PC-3 (cell line): ENCODE measurements at regions of chr3 and their contacts with region 1.

Region 1: GRCh38 chr3:150495563-150496168 is 50.6 kb downstream of the SERP1 start:
- DNase-seq: peak; percentile 85
- ATAC-seq: peak; percentile 15
- H3K4me3 ChIP-seq: no peak overlapping the region
- H3K27ac ChIP-seq: no peak overlapping the region
- H3K4me1 ChIP-seq: peaks cover 38% of the 10 kb centered on the region
- H3K27me3 ChIP-seq: no peaks in the 10 kb centered on the region
- CTCF ChIP-seq: peak; percentile 91

Region 2: DNA sequence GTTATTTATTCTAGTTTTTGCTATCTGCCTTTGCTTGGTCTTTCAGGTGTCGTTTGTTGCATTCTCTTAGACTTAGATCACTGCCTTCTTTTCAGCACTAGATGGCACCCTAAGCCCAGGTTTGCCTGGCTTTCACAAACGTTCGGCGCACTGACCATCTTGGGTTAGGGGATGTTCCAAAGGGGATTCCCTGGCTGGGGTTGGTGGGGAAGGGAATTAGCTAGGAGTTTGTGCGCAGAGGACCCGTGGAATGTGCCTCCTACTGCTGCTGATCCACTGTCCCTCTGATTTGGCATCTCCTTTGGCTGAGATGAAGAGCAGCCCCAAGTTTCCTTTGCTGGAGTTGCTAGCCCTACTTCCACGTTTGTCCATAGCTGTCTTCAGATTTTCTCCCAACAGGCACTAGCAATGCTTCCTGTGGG is 558.8 kb before region 1 on chr3:
- CTCF ChIA-PET with region 1: no interaction called
- POLR2A ChIA-PET with region 1: no interaction called
- intact Hi-C with region 1: loop called (anchors 5 kb)
- DNase-seq: peak; percentile 77
- ATAC-seq: peak; percentile 93
- H3K4me3 ChIP-seq: peak overlapping the region; percentile 37; the same call in 1 of the 2 replicates
- H3K27ac ChIP-seq: no peak overlapping the region
- H3K4me1 ChIP-seq: peaks cover 5% of the 10 kb centered on the region; the same call in 1 of the 2 replicates
- H3K27me3 ChIP-seq: no peaks in the 10 kb centered on the region
- CTCF ChIP-seq: peak; percentile 95

Region 3: GRCh38 chr3:150227839-150228238 is 267.8 kb before region 1 on chr3:
- CTCF ChIA-PET with region 1: no interaction called
- POLR2A ChIA-PET with region 1: no interaction called
- intact Hi-C with region 1: loop called (anchors 2 kb)
- DNase-seq: peak; percentile 83
- ATAC-seq: peak; percentile 87
- H3K4me3 ChIP-seq: no peak overlapping the region
- H3K27ac ChIP-seq: no peak overlapping the region
- H3K4me1 ChIP-seq: peaks cover 7% of the 10 kb centered on the region
- H3K27me3 ChIP-seq: no peaks in the 10 kb centered on the region
- CTCF ChIP-seq: peak; percentile 93

Region 4: GRCh38 chr3:150286390-150287147 is 209.1 kb before region 1 on chr3:
- CTCF ChIA-PET with region 1: interaction called, 6 read pairs
- POLR2A ChIA-PET with region 1: no interaction called
- intact Hi-C with region 1: loop called (anchors 1 kb)
- DNase-seq: peak; percentile 80
- ATAC-seq: peak; percentile 98
- H3K4me3 ChIP-seq: peak overlapping the region; percentile 29
- H3K27ac ChIP-seq: no peak overlapping the region
- H3K4me1 ChIP-seq: peaks cover 7% of the 10 kb centered on the region
- H3K27me3 ChIP-seq: no peaks in the 10 kb centered on the region
- CTCF ChIP-seq: peak; percentile 87

Region 5: GRCh38 chr3:150348500-150348899 is 147.2 kb before region 1 on chr3:
- CTCF ChIA-PET with region 1: no interaction called
- POLR2A ChIA-PET with region 1: no interaction called
- intact Hi-C with region 1: loop called (anchors 2 kb)
- DNase-seq: peak; percentile 96
- ATAC-seq: peak; percentile 78
- H3K4me3 ChIP-seq: peak overlapping the region; percentile 53
- H3K27ac ChIP-seq: peak overlapping the region; percentile 83
- H3K4me1 ChIP-seq: peaks cover 72% of the 10 kb centered on the region
- H3K27me3 ChIP-seq: no peaks in the 10 kb centered on the region
- CTCF ChIP-seq: no peak

Region 6: DNA sequence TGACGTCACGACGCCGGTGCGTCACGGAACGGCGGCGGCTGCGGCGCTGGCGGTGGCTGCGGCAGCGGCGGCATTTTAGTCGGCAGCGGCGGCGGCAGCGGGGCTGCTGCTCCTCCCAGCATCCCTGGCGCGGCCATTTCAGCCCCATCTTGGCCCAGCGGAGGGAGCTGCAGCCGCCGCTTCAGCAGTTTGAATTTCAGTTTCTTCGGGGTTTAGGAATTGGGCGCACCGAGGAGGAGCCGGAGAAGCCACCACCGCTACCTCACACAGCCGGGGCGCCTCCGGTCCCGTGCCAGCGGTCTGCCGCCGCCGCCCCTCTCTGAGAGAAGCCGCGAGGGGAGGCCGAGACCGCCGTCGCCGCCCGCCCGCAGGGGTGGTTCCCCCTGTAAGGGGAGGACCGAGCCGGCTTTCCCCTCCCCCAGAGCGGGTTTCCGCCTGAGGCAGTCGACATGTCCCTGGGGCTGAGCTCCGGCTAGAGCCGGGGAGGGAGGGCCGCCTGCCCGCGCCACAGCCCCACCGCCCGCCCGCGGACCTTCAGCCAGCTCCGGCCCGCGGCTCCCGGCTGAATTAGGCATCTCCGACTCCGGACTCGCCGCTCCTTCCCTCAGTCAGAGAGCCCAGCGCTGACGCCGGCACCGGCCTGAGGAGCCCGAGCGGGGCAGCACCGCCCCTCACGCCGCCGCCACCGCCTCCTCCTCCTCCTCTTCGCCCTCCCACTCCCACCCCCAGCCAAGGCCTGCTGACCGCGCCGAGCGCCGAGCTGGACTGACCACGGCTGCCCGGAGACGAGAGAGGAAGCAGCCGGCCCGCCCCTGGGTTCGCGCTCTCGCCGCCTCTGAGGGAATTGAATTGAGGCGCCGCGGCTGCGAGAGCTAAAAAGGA is 87.2 kb before region 1 on chr3 and contains the start of gene TSC22D2:
- CTCF ChIA-PET with region 1: interaction called, 22 read pairs
- POLR2A ChIA-PET with region 1: interaction called, 3 read pairs
- intact Hi-C with region 1: loop called (anchors 1 kb)
- DNase-seq: peak; percentile 95
- ATAC-seq: peak; percentile 64
- H3K4me3 ChIP-seq: peak within 1 kb of the TSS; percentile 87
- H3K27ac ChIP-seq: peak within 1 kb of the TSS; percentile 91
- H3K4me1 ChIP-seq: peaks cover 19% of the 10 kb centered on the region
- H3K27me3 ChIP-seq: no peaks in the 10 kb centered on the region
- CTCF ChIP-seq: peak; percentile 39; the same call in 1 of the 2 replicates
- total RNA-seq, gene TSC22D2: 9.6 and 15.7 TPM in 2 replicates

Region 7: DNA sequence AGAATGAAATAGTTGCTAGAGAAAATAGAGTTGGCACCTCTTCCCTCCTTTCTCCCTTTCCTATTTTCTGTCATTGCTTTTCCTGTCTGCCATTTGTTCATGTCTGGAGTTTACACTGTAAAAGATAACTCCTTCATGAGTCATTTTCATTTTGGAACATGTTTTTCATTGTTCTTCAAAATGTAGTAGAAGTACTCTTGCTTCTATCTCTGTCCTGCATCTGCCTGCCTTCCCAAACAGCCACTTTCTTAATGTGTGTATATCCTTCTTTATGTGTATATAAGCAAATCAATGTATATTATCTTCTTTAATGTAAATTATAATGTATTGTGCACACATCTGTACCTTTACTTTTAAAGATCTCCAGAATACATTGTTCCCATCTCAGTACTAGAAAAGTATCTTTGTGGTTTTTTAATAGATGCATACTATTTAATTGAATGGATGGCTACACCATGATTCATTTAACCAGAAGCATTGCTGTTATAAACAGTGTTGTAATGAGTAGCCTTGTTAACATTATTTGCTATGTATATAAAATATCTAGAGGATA is 46.4 kb before region 1 on chr3:
- CTCF ChIA-PET with region 1: no interaction called
- POLR2A ChIA-PET with region 1: no interaction called
- intact Hi-C with region 1: loop called (anchors 1 kb)
- DNase-seq: peak; percentile 80
- ATAC-seq: peak; percentile 65
- H3K4me3 ChIP-seq: 0 out of 2 replicates have a peak overlapping the region, but pooled peaks have one; percentile 37
- H3K27ac ChIP-seq: peak overlapping the region; percentile 69
- H3K4me1 ChIP-seq: peaks cover 65% of the 10 kb centered on the region
- H3K27me3 ChIP-seq: no peaks in the 10 kb centered on the region
- CTCF ChIP-seq: no peak